Heart left ventricle (tissue), 16 donors: ENCODE measurements at regions of chr21 and their contacts with region 1.

Region 1: DNA sequence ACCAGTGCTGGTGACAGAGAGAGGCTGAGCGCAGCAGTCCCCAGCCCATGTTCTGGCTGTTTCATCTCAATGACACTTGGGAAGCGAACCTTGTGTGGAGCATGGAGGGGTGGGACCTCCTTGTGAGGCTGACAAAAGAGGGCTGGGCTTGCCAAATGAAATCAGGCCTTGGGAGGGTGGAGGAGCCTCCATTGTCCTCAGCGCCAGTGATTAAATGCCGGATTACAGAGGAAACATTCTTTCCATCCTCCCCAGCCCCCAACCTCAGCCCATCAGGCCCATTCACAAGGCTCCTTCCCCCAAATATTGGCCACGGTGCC is 63.3 kb upstream of the PAXBP1 start:
- DNase-seq: no peak
- ATAC-seq: no peak
- H3K4me3 ChIP-seq: no peak overlapping the region
- H3K27ac ChIP-seq: no peak overlapping the region
- H3K4me1 ChIP-seq: peaks cover 0 to 4% (median 0%) of the 10 kb centered on the region in 12 donors
- H3K27me3 ChIP-seq: peaks cover 0 to 10% (median 0%) of the 10 kb centered on the region in 9 donors
- CTCF ChIP-seq: no peak
- POLR2A ChIP-seq: no peak

Region 2: DNA sequence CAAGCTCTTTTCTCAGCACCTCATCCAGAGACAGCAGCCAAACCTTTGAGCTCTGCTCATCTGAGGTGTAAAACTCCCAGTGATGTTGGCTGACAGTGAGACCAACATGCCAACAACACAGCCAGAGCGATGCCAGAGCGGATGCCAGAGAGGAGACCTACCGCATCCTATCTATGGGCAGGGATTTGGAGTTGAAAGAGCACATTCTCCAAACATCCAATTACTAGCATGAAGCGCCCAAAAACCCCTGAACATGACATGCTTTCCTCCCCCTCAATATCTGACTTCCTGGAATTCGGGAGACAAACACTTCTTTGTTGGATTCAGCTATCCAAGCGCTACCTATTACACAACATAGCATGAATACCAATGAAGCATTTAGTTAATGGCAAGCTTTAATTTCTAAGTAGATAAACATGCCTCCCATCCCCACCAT is 40.2 kb before region 1 on chr21:
- intact Hi-C with region 1: no loop called
- DNase-seq: no peak
- ATAC-seq: peak in 2 of 4 donors; percentile 47 to 56
- H3K4me3 ChIP-seq: no peak overlapping the region
- H3K27ac ChIP-seq: peak overlapping the region in 1 of 12 donors; percentile 11
- H3K4me1 ChIP-seq: peaks cover 0 to 3% (median 0%) of the 10 kb centered on the region in 12 donors
- H3K27me3 ChIP-seq: no peaks in the 10 kb centered on the region
- CTCF ChIP-seq: no peak
- POLR2A ChIP-seq: no peak

Region 3: GRCh38 chr21:33011462-33011861 is 176.6 kb after region 1 on chr21:
- intact Hi-C with region 1: no loop called
- DNase-seq: no peak
- ATAC-seq: peak in 1 of 4 donors; percentile 33
- H3K4me3 ChIP-seq: no peak overlapping the region
- H3K27ac ChIP-seq: no peak overlapping the region
- H3K4me1 ChIP-seq: peaks cover 0 to 25% (median 0%) of the 10 kb centered on the region in 12 donors
- H3K27me3 ChIP-seq: peaks cover 0 to 55% (median 13%) of the 10 kb centered on the region in 9 donors
- CTCF ChIP-seq: no peak
- POLR2A ChIP-seq: no peak

Region 4: DNA sequence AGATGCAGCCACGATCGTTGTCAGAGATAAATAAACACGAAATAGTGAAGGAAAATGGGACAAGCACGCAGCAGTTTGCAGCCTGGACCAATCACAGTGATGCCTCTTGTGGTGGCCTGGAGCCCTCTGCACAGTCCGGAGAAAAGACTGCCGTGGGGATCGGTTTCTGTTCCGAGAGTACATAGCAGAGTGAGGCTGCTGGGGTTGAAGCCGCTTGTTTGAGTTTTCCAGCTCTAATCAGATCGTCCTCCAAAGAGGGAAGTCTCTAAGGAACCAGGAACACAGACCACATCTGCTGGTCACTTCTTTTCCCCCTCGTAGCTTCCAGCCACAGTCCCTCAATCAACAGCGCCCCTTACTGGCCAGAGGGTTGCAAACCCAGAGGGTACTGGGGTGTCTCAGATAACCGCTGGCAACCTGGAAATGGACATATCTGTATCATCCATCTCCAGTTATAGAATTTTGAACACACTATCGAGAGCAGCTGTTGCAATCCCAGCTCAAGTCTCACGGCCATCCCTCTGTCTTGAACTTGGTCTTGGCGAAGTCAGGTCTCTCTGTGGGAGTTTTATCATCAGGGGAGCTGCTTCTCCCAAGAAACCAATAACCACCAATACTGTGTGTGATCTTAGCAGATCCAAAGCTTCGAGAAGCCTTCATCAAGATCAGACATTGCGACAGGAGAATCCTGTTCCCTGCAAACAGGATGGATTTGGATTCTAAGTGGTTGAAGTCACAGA is 292.4 kb after region 1 on chr21:
- intact Hi-C with region 1: loop called in 5 of 10 experiments (anchors 5 to 10 kb)
- DNase-seq: peak; percentile 53 to 77 (median 67)
- ATAC-seq: peak; percentile 64 to 91 (median 90)
- H3K4me3 ChIP-seq: peak overlapping the region in 10 of 12 donors; percentile 12 to 52 (median 40)
- H3K27ac ChIP-seq: no peak overlapping the region
- H3K4me1 ChIP-seq: peaks cover 0 to 9% (median 2%) of the 10 kb centered on the region in 12 donors
- H3K27me3 ChIP-seq: peaks cover 0 to 39% (median 9%) of the 10 kb centered on the region in 9 donors
- CTCF ChIP-seq: peak; percentile 46 to 81 (median 70)
- POLR2A ChIP-seq: no peak

Region 5: GRCh38 chr21:33185852-33186251 is 351.0 kb after region 1 on chr21:
- intact Hi-C with region 1: loop called in 5 of 10 experiments (anchors 5 to 10 kb)
- DNase-seq: no peak
- ATAC-seq: peak in 1 of 4 donors; percentile 28
- H3K4me3 ChIP-seq: no peak overlapping the region
- H3K27ac ChIP-seq: peak overlapping the region in 1 of 12 donors; percentile 35
- H3K4me1 ChIP-seq: peaks cover 0 to 21% (median 2%) of the 10 kb centered on the region in 12 donors
- H3K27me3 ChIP-seq: peaks cover 0 to 3% (median 0%) of the 10 kb centered on the region in 9 donors
- CTCF ChIP-seq: no peak
- POLR2A ChIP-seq: no peak

Region 6: DNA sequence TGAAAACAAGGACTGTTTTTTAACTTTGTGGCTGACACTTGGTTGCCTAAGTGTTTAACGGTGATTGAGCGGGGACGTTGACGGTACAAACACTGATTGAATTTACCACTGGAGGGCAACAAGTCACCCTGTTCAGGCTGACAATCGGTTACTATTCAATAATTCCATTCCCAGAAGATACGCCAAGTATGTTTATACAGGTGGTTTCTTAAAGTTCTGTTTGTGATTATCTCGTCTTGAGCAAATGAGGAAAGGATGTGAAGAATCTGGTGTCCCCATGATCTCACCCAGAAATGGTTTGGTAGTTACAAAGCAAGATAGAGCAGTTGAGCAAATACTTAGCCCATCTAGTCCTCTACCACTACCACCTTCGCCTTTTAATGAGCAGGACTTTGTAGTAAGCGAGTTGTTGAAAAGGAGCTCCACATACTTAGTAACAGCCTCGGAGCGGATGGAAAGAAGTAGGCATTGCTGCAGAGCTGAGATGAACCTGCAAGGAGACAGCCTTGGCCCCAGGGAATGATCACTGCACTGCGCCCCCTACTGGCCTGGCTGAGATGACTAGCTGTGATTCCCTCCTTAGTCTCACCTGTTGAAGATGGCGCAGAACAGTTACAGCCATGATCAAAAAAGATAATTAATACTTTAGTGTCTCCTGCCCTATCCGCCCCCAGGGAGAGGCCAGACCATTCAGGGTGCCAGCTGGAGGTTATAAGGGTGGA is 526.2 kb after region 1 on chr21:
- intact Hi-C with region 1: loop called in 1 of 10 experiments (anchors 10 kb)
- DNase-seq: peak; percentile 74 to 86 (median 77)
- ATAC-seq: peak; percentile 74 to 86 (median 80)
- H3K4me3 ChIP-seq: peak overlapping the region in 11 of 12 donors; percentile 16 to 55 (median 36)
- H3K27ac ChIP-seq: peak overlapping the region in 11 of 12 donors; percentile 34 to 90 (median 58)
- H3K4me1 ChIP-seq: peaks cover 0 to 39% (median 20%) of the 10 kb centered on the region in 12 donors
- H3K27me3 ChIP-seq: no peaks in the 10 kb centered on the region
- CTCF ChIP-seq: peak; percentile 71 to 88 (median 82)
- POLR2A ChIP-seq: no peak

Region 7: DNA sequence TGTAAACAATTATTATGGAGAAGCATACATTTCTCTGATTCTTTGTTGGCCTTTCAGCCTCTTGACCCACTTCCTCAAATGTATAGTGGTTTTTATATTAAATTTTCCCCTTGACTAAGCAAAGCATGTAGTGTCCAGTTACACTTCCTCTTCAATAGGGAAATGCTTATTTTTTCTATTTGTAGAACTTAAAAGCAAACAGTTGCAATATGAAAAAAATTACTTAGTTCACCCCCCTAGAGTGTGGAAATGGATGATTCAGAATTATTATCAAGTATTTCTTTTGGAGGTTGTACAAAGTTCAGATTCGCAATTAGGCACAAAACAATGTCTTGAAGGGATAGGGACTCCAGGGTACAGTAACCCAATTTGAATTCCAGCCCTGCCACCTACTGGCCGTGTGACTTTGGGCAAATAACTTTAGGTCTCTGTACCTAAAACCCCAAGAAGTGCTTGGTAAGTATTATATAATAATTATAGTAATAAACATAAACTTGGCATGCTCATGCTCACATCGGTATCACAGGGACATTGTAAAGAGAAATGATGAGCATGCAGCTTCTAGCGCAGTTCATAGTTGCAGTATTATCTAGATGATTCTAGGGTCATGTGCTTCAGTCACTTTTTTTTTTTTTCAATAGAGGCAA is 539.7 kb after region 1 on chr21:
- intact Hi-C with region 1: loop called in 3 of 10 experiments (anchors 10 kb)
- DNase-seq: peak in 3 of 5 donors; percentile 54 to 58 (median 57)
- ATAC-seq: peak; percentile 70 to 78 (median 75)
- H3K4me3 ChIP-seq: no peak overlapping the region
- H3K27ac ChIP-seq: peak overlapping the region in 5 of 12 donors; percentile 11 to 91 (median 34)
- H3K4me1 ChIP-seq: peaks cover 0 to 50% (median 5%) of the 10 kb centered on the region in 12 donors
- H3K27me3 ChIP-seq: no peaks in the 10 kb centered on the region
- CTCF ChIP-seq: peak; percentile 41 to 80 (median 67)
- POLR2A ChIP-seq: no peak

Region 8: GRCh38 chr21:33441489-33442477 is 606.9 kb after region 1 on chr21:
- intact Hi-C with region 1: loop called in 4 of 10 experiments (anchors 10 kb)
- DNase-seq: peak in 4 of 5 donors; percentile 70 to 80 (median 78)
- ATAC-seq: peak; percentile 59 to 80 (median 75)
- H3K4me3 ChIP-seq: no peak overlapping the region
- H3K27ac ChIP-seq: peak overlapping the region in 11 of 12 donors; percentile 21 to 71 (median 51)
- H3K4me1 ChIP-seq: peaks cover 0 to 26% (median 13%) of the 10 kb centered on the region in 12 donors
- H3K27me3 ChIP-seq: no peaks in the 10 kb centered on the region
- CTCF ChIP-seq: no peak
- POLR2A ChIP-seq: no peak

Region 9: DNA sequence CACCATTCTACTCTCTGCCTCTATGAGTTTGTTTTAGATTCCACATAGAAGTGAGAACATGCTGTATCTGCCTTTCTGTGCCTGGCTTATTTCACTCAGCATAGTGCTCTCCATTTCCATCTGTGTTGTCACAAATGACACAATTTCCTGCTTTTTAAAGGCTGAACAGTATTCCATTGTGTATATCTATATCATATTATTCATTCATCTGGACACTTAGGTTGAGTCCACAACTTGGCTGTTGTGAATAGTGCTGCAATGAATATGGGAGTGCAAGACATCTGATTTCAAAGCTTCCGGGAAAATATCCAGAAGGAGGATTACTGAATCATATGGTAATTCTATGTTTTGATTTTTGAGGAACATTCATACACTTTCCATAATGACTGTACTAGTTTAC is 773.7 kb after region 1 on chr21:
- intact Hi-C with region 1: loop called in 1 of 10 experiments (anchors 10 kb)
- DNase-seq: no peak
- ATAC-seq: no peak
- H3K4me3 ChIP-seq: no peak overlapping the region
- H3K27ac ChIP-seq: no peak overlapping the region
- H3K4me1 ChIP-seq: no peaks in the 10 kb centered on the region
- H3K27me3 ChIP-seq: no peaks in the 10 kb centered on the region
- CTCF ChIP-seq: no peak
- POLR2A ChIP-seq: no peak